Transverse colon (tissue), 4 donors: ENCODE measurements at regions of chr9 and their contacts with region 1.

Region 1: DNA sequence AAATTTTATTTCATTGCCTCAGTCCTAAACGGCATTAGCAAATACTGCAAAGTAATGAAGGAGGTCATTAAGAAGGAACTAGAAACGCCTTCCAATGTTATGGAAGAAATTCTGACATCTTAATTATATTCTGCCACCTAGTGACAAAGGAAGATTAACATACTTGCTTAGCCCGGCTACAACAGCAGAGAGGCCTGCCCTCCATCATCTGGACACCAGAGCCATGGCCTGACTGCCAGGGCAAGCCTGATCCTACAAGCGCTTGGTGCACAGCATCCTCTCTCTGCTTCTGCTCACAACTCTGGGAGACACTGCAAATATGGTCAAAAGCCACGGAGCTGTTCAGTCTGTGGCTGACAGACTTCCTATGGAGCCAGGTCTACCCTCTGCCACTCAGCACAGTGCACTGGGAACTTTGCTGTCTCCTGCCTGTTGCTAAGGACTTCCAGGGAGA is 87.3 kb upstream of the SLC44A1 start:
- DNase-seq: peak; percentile 61
- H3K4me3 ChIP-seq: no peak overlapping the region
- H3K27ac ChIP-seq: peak overlapping the region; percentile 22 to 66 (median 57)
- H3K4me1 ChIP-seq: peaks cover 0 to 14% (median 0%) of the 10 kb centered on the region in 4 donors
- H3K27me3 ChIP-seq: no peaks in the 10 kb centered on the region
- CTCF ChIP-seq: peak; percentile 42 to 66 (median 45)
- EP300 ChIP-seq: peak; percentile 56
- POLR2A ChIP-seq: no peak

Region 2: DNA sequence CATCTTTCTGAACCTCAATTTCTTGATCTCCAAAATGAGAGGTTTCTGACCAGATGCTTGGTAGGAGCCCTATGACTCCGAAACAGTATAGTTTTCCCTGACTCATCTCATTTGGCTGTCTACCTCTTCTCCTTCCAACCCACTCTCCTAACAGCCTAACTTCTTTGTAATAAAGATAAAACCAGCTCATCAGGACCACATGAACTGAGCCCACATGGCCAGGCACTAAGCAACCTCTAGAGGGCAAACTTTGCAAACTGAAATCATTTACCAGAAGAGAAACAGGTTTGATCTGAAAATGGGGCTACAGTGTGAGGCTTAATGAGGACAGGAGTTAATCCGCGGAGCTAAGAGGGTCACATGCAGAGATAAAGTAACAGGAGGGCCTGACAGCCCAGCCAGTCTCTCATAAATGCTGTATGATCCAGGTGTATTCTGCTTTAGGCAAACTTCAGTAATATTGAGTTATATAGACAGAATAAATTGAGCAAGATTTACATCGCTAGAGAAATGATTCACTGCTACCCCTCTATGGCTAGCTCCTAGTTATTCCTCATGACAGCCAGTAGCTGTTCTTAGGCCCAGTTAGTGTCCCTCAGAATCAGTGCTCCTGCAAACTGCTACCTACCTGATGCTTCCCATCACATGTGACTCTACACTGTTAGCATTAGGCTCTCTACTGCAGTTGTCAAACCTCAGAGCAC is 293.8 kb before region 1 on chr9:
- in situ Hi-C with region 1: loop called in 1 of 4 experiments (anchors 10 kb)
- intact Hi-C with region 1: no loop called
- DNase-seq: peak; percentile 32
- H3K4me3 ChIP-seq: no peak overlapping the region
- H3K27ac ChIP-seq: peak overlapping the region; percentile 47 to 55 (median 52)
- H3K4me1 ChIP-seq: peaks cover 9 to 55% (median 26%) of the 10 kb centered on the region in 4 donors
- H3K27me3 ChIP-seq: no peaks in the 10 kb centered on the region
- CTCF ChIP-seq: peak; percentile 57 to 76 (median 64)
- EP300 ChIP-seq: no peak
- POLR2A ChIP-seq: no peak

Region 3: DNA sequence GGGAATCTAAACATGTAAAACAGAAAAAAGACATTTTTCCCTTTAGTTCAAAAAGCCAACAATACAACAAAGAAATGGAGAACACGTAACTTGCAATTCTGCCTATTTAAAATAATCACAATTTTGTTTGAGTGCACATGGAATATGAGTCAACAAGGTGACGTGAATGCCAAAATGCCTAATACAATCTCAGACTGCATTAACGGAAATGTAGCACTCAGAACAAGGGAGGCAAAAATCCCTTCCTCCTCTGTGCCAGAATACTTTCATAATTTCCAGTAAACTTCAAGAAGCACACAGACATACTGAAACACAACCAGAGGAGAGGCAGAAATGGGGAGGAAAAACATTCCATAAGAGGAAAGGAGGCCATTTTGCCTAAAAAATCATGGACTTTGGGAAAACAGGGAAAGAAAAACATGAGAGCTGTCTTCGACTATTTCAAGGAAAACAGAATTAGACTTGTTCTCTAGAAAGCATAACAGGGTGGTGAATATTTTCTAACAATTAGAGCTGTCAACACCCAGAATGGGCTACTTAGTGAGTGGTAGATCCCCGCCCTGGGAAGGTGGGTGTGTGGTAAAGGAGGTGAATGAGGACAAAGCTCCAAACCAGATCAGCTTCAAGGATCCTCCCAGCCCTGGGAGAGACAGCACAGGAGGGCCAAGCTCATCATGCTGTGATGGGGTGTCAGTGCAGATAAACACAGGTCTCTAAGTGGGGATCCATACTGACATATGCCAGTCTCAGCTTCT is 277.4 kb before region 1 on chr9:
- in situ Hi-C with region 1: no loop called
- intact Hi-C with region 1: no loop called
- DNase-seq: no peak
- H3K4me3 ChIP-seq: no peak overlapping the region
- H3K27ac ChIP-seq: peak overlapping the region; percentile 40 to 61 (median 46)
- H3K4me1 ChIP-seq: peaks cover 0 to 13% (median 2%) of the 10 kb centered on the region in 4 donors
- H3K27me3 ChIP-seq: no peaks in the 10 kb centered on the region
- CTCF ChIP-seq: no peak
- EP300 ChIP-seq: no peak
- POLR2A ChIP-seq: no peak

Region 4: GRCh38 chr9:105007143-105007542 is 150.0 kb before region 1 on chr9:
- in situ Hi-C with region 1: loop called in 1 of 4 experiments (anchors 10 kb)
- intact Hi-C with region 1: no loop called
- DNase-seq: peak; percentile 50
- H3K4me3 ChIP-seq: no peak overlapping the region
- H3K27ac ChIP-seq: peak overlapping the region; percentile 5 to 51 (median 33)
- H3K4me1 ChIP-seq: peaks cover 0 to 7% (median 3%) of the 10 kb centered on the region in 4 donors
- H3K27me3 ChIP-seq: no peaks in the 10 kb centered on the region
- CTCF ChIP-seq: no peak
- EP300 ChIP-seq: no peak
- POLR2A ChIP-seq: no peak

Region 5: GRCh38 chr9:105064315-105065097 is 92.7 kb before region 1 on chr9:
- in situ Hi-C with region 1: loop called in 1 of 4 experiments (anchors 10 kb)
- intact Hi-C with region 1: no loop called
- DNase-seq: peak; percentile 93
- H3K4me3 ChIP-seq: peak overlapping the region in 1 of 4 donors; percentile 5
- H3K27ac ChIP-seq: peak overlapping the region; percentile 80 to 88 (median 86)
- H3K4me1 ChIP-seq: peaks cover 23 to 32% (median 26%) of the 10 kb centered on the region in 4 donors
- H3K27me3 ChIP-seq: no peaks in the 10 kb centered on the region
- CTCF ChIP-seq: peak in 1 of 5 experiments; percentile 32
- EP300 ChIP-seq: peak; percentile 73
- POLR2A ChIP-seq: peak; percentile 59

Region 6: GRCh38 chr9:105483618-105484017 is 326.5 kb after region 1 on chr9:
- in situ Hi-C with region 1: no loop called
- intact Hi-C with region 1: no loop called
- DNase-seq: no peak
- H3K4me3 ChIP-seq: no peak overlapping the region
- H3K27ac ChIP-seq: no peak overlapping the region
- H3K4me1 ChIP-seq: no peaks in the 10 kb centered on the region
- H3K27me3 ChIP-seq: no peaks in the 10 kb centered on the region
- CTCF ChIP-seq: no peak
- EP300 ChIP-seq: no peak
- POLR2A ChIP-seq: no peak